ENCODE measurements at regions of chr1 and their contacts with region 1.

Region 1: DNA sequence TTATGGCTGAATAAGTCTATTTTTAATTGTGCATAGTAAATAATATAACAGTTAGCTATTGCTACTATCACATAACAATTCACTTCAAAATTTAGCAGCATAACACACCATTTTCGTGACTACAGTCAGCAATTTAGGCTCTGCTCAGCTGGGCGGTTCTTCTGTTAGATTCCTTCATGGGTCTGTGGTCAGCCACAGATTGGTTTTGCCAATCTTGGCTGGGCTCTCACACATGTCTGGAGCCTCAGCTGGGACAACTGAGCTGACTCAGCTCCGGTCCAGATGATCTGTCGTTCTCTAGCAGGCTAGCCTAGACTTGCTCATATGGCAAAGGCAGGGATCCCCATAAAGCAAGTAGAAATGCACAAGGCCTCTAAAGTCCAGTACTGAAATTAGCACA is 15.1 kb upstream of the CDC42BPA start:
- DNase-seq: no peak
- ATAC-seq: no peak
- H3K4me3 ChIP-seq: no peak overlapping the region
- H3K27ac ChIP-seq: no peak overlapping the region
- H3K4me1 ChIP-seq: no peaks in the 10 kb centered on the region
- H3K27me3 ChIP-seq: no peaks in the 10 kb centered on the region
- CTCF ChIP-seq: no peak

Region 2: GRCh38 chr1:227401562-227402342 is 68.3 kb after region 1 on chr1:
- CTCF ChIA-PET with region 1: no interaction called
- POLR2A ChIA-PET with region 1: interaction called, 11 read pairs
- in situ Hi-C with region 1: no loop called
- intact Hi-C with region 1: no loop called
- DNase-seq: no peak
- ATAC-seq: no peak
- H3K4me3 ChIP-seq: no peak overlapping the region
- H3K27ac ChIP-seq: no peak overlapping the region
- H3K4me1 ChIP-seq: no peaks in the 10 kb centered on the region
- H3K27me3 ChIP-seq: no peaks in the 10 kb centered on the region
- CTCF ChIP-seq: no peak

Region 3: GRCh38 chr1:227586733-227587132 is 253.3 kb after region 1 on chr1:
- CTCF ChIA-PET with region 1: no interaction called
- POLR2A ChIA-PET with region 1: no interaction called
- in situ Hi-C with region 1: no loop called
- intact Hi-C with region 1: no loop called
- DNase-seq: no peak
- ATAC-seq: no peak
- H3K4me3 ChIP-seq: no peak overlapping the region
- H3K27ac ChIP-seq: no peak overlapping the region
- H3K4me1 ChIP-seq: no peaks in the 10 kb centered on the region
- H3K27me3 ChIP-seq: no peaks in the 10 kb centered on the region
- CTCF ChIP-seq: no peak